ENCODE measurements at regions of chr2 and their contacts with region 1.

Region 1: GRCh38 chr2:26345545-26346453 is at the start of gene SELENOI:
- DNase-seq: peak; percentile 98 to 100 (median 99)
- ATAC-seq: peak; percentile 92
- H3K4me3 ChIP-seq: peak within 1 kb of the TSS; percentile 85 to 86
- H3K4me3 Mint-ChIP-seq: peak within 1 kb of the TSS; percentile 98
- H3K27ac ChIP-seq: peak within 1 kb of the TSS; percentile 80 to 91
- H3K27ac Mint-ChIP-seq: peak within 1 kb of the TSS; percentile 100
- H3K4me1 ChIP-seq: peaks cover 28% of the 10 kb centered on the region
- H3K4me1 Mint-ChIP-seq: peaks cover 42% of the 10 kb centered on the region
- H3K27me3 ChIP-seq: no peaks in the 10 kb centered on the region
- H3K27me3 Mint-ChIP-seq: no peaks in the 10 kb centered on the region
- CTCF ChIP-seq: no peak
- total RNA-seq, gene SELENOI: 34.3 to 40.8 TPM

Region 2: DNA sequence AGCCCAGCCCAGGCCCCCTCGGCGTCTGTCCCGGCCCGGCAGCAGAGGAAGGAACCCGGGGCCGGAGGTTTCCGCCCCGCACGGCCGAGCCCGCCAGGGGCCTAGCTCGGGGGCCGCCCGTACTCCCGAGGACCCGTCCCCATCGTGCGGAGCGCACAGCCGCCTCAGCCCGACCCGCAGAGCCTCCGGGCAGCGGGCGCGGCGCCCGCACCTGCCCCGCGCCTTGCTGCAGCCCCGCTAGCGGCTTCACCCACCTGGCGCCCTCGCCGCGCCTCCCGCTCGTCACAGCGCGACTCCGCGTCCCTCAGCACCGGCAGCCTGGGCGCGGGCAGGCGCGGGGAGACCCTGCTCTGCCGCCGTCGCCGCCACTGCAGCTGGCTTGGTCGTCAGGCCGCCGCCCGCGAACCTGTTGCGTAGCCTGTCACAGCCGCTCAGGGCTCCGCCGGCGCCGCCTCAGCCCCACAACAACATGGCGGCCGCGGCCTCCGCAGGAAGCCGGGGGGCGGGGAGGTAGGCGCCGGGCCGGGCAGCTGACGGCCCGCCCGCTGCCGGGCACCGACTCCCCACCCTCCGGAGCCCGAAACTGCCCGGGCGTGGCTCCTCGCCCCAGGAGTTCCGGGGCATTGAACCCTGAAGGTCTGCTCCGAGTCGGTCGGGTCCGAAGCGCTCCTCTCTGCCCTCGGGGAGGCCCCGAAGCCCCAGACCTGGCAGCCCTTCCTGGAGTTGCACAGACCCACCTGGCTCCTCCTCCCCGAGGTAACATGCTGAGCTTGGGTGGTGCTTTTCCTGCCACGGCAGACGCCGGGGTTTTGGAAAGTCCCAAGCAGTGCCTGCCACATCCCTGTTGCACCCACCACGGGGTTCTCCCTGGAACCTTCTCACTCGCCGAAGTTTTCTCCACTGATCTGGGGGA is 1985.5 kb before region 1 on chr2 and contains the start of gene ITSN2:
- CTCF ChIA-PET with region 1: no interaction called
- POLR2A ChIA-PET with region 1: no interaction called
- intact Hi-C with region 1: loop called in 1 of 2 experiments (anchors 5 kb)
- DNase-seq: peak; percentile 63 to 95 (median 82)
- ATAC-seq: peak; percentile 83
- H3K4me3 ChIP-seq: peak within 1 kb of the TSS; percentile 79 to 94
- H3K4me3 Mint-ChIP-seq: peak within 1 kb of the TSS; percentile 96
- H3K27ac ChIP-seq: peak within 1 kb of the TSS; percentile 93 to 95
- H3K27ac Mint-ChIP-seq: peak within 1 kb of the TSS; percentile 95
- H3K4me1 ChIP-seq: peaks cover 20% of the 10 kb centered on the region
- H3K4me1 Mint-ChIP-seq: peaks cover 31% of the 10 kb centered on the region
- H3K27me3 ChIP-seq: no peaks in the 10 kb centered on the region
- H3K27me3 Mint-ChIP-seq: no peaks in the 10 kb centered on the region
- CTCF ChIP-seq: no peak
- total RNA-seq, gene ITSN2: 86.0 to 89.3 TPM

Region 3: GRCh38 chr2:25215948-25216679 is 1129.7 kb before region 1 on chr2:
- CTCF ChIA-PET with region 1: no interaction called
- POLR2A ChIA-PET with region 1: no interaction called
- intact Hi-C with region 1: loop called in 1 of 2 experiments (anchors 10 kb)
- DNase-seq: peak; percentile 64 to 96 (median 88)
- ATAC-seq: peak; percentile 95
- H3K4me3 ChIP-seq: peak overlapping the region; percentile 59 to 72
- H3K4me3 Mint-ChIP-seq: peak overlapping the region; percentile 77
- H3K27ac ChIP-seq: peak overlapping the region; percentile 68 to 72
- H3K27ac Mint-ChIP-seq: peak overlapping the region; percentile 80
- H3K4me1 ChIP-seq: peaks cover 7% of the 10 kb centered on the region
- H3K4me1 Mint-ChIP-seq: peaks cover 10% of the 10 kb centered on the region
- H3K27me3 ChIP-seq: no peaks in the 10 kb centered on the region
- H3K27me3 Mint-ChIP-seq: no peaks in the 10 kb centered on the region
- CTCF ChIP-seq: no peak

Region 4: DNA sequence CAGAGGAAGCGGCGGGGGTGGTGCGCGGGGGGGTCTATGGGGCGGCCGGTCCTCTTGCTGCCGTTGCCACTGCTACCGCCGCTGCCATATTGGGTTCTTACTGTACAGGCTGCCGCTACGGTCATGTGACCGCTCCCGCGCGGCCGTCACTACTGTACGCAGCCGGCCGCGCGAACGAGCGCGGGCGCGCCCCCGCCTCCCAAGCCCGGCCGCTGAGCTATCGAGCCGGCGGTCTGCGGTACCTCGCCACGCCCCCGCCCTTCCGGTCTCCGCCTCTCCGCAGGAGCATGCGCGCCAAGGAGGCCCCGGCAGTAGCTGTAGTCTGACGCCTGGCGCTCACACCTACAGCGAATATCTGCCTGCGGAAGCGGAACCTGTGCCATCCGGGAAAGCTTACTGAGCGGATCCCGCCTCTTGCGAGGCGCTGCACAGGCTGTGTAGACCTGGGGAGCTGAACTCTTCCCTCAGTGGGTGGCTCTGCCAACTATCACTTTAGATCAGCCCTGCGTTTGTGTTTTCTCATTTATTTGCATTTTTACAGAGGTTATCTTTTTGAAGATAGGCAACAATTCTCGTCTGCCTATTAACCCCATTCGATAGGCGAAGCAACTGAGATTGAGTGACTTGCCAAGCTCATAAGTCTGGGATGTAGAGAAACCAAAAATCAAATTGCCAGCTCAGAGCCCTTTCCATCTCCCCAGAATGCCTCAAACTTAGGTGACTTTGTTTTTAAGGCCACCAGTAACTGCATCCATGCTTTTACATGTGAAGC is 467.3 kb before region 1 on chr2 and contains the start of gene ASXL2:
- CTCF ChIA-PET with region 1: no interaction called
- POLR2A ChIA-PET with region 1: interaction called, 4 read pairs
- intact Hi-C with region 1: loop called (anchors 2 to 5 kb)
- DNase-seq: peak; percentile 93 to 100 (median 97)
- ATAC-seq: peak; percentile 85
- H3K4me3 ChIP-seq: peak within 1 kb of the TSS; percentile 74 to 93
- H3K4me3 Mint-ChIP-seq: peak within 1 kb of the TSS; percentile 92
- H3K27ac ChIP-seq: peak within 1 kb of the TSS; percentile 95 to 96
- H3K27ac Mint-ChIP-seq: peak within 1 kb of the TSS; percentile 99
- H3K4me1 ChIP-seq: peaks cover 25% of the 10 kb centered on the region
- H3K4me1 Mint-ChIP-seq: peaks cover 34% of the 10 kb centered on the region
- H3K27me3 ChIP-seq: no peaks in the 10 kb centered on the region
- H3K27me3 Mint-ChIP-seq: no peaks in the 10 kb centered on the region
- CTCF ChIP-seq: no peak
- total RNA-seq, gene ASXL2: 7.5 to 10.7 TPM

Region 5: GRCh38 chr2:26033818-26034636 is 311.8 kb before region 1 on chr2 and contains the start of gene RAB10:
- CTCF ChIA-PET with region 1: no interaction called
- POLR2A ChIA-PET with region 1: no interaction called
- intact Hi-C with region 1: loop called in 1 of 2 experiments (anchors 1 kb)
- DNase-seq: peak; percentile 98 to 100 (median 99)
- ATAC-seq: peak; percentile 89
- H3K4me3 ChIP-seq: peak within 1 kb of the TSS; percentile 82 to 99
- H3K4me3 Mint-ChIP-seq: peak within 1 kb of the TSS; percentile 95
- H3K27ac ChIP-seq: peak within 1 kb of the TSS; percentile 92 to 93
- H3K27ac Mint-ChIP-seq: peak within 1 kb of the TSS; percentile 98
- H3K4me1 ChIP-seq: peaks cover 29% of the 10 kb centered on the region
- H3K4me1 Mint-ChIP-seq: peaks cover 40% of the 10 kb centered on the region
- H3K27me3 ChIP-seq: no peaks in the 10 kb centered on the region
- H3K27me3 Mint-ChIP-seq: no peaks in the 10 kb centered on the region
- CTCF ChIP-seq: no peak
- total RNA-seq, gene RAB10: 12.7 TPM

Region 6: GRCh38 chr2:26299471-26300101 is 46.2 kb before region 1 on chr2:
- CTCF ChIA-PET with region 1: no interaction called
- POLR2A ChIA-PET with region 1: interaction called, 12 read pairs
- intact Hi-C with region 1: loop called (anchors 1 to 5 kb)
- DNase-seq: peak in 6 of 9 experiments; percentile 13 to 64 (median 29)
- ATAC-seq: peak; percentile 49
- H3K4me3 ChIP-seq: peak overlapping the region; percentile 78 to 84
- H3K4me3 Mint-ChIP-seq: no peak overlapping the region
- H3K27ac ChIP-seq: peak overlapping the region; percentile 68 to 80
- H3K27ac Mint-ChIP-seq: no peak overlapping the region
- H3K4me1 ChIP-seq: peaks cover 19% of the 10 kb centered on the region
- H3K4me1 Mint-ChIP-seq: no peaks in the 10 kb centered on the region
- H3K27me3 ChIP-seq: no peaks in the 10 kb centered on the region
- H3K27me3 Mint-ChIP-seq: no peaks in the 10 kb centered on the region
- CTCF ChIP-seq: no peak

Region 7: GRCh38 chr2:26785431-26786206 is 439.8 kb after region 1 on chr2 and contains the start of gene CENPA:
- CTCF ChIA-PET with region 1: no interaction called
- POLR2A ChIA-PET with region 1: no interaction called
- intact Hi-C with region 1: loop called in 1 of 2 experiments (anchors 10 kb)
- DNase-seq: peak; percentile 92 to 99 (median 94)
- ATAC-seq: peak; percentile 99
- H3K4me3 ChIP-seq: peak within 1 kb of the TSS; percentile 52 to 63
- H3K4me3 Mint-ChIP-seq: peak within 1 kb of the TSS; percentile 84
- H3K27ac ChIP-seq: peak within 1 kb of the TSS; percentile 58 to 61
- H3K27ac Mint-ChIP-seq: peak within 1 kb of the TSS; percentile 88
- H3K4me1 ChIP-seq: peaks cover 16% of the 10 kb centered on the region
- H3K4me1 Mint-ChIP-seq: peaks cover 12% of the 10 kb centered on the region
- H3K27me3 ChIP-seq: no peaks in the 10 kb centered on the region
- H3K27me3 Mint-ChIP-seq: peaks cover 11% of the 10 kb centered on the region
- CTCF ChIP-seq: no peak
- total RNA-seq, gene CENPA: 0.39 to 0.62 TPM